Colonic mucosa (tissue), 4 donors: ENCODE measurements at regions of chr7 and their contacts with region 1.

Region 1: DNA sequence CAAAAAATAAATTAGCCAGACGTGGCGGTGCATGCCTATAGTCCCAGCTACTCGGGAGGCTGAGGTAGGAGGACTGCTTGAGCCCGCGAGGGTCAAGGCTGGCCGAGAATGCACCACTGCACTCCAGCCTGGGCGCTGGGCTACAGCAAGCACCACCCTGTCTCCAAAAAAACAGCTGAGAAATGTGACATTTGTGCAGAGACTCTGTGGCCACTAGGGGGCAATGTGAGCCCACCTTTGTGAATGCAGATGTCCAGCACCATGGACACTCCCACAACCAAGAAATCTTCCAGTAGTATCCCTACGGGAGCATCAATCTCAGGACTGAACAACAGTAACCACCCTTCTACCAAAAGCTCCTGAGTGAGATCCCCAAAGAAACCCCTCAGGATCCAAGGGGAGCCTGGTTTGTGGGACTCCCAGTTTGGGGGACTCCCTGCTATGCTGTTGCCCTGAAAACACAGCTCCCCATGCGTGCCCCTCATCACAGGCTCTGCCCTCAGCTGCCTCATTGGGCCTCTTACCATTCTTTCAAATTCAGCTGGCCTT is 6.2 kb upstream of the AHCYL2 start:
- DNase-seq: peak; percentile 90
- H3K4me3 ChIP-seq: no peak overlapping the region
- H3K27ac ChIP-seq: no peak overlapping the region
- H3K4me1 ChIP-seq: no peaks in the 10 kb centered on the region
- H3K27me3 ChIP-seq: no peaks in the 10 kb centered on the region
- CTCF ChIP-seq: peak; percentile 86

Region 2: DNA sequence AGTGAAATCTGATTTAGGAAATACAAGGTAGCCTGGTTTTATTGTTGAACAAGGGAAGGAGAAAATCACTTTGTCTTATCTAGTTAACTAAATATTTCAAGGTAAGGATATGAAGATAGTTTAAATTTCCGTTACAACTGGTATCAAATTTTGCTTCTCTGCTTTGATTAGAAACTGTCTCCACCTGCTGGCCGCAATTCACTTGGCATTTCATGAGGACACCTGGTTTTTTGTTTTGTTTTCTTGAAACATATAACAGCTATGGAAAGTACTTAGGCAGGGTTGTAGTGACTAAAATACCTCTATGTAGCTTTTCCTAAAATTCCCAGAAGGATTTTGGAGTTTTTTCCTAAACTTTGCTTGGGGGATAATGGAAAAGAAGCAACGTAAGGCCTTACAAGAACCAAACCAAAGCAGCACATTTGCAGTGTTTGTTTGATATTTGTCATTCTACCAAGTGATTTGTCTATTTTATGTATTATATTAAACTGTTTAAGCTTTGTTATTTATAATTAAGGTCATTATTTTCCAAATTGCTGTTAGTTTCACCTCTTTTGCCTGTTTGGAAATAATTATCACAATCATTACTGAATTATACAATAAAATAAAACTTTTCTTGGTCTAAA is 79.8 kb after region 1 on chr7:
- intact Hi-C with region 1: loop called (anchors 2 kb)
- DNase-seq: peak; percentile 47
- H3K4me3 ChIP-seq: no peak overlapping the region
- H3K27ac ChIP-seq: no peak overlapping the region
- H3K4me1 ChIP-seq: no peaks in the 10 kb centered on the region
- H3K27me3 ChIP-seq: no peaks in the 10 kb centered on the region
- CTCF ChIP-seq: peak; percentile 54

Region 3: GRCh38 chr7:129332284-129333035 is 113.9 kb after region 1 on chr7:
- intact Hi-C with region 1: no loop called
- DNase-seq: no peak
- H3K4me3 ChIP-seq: no peak overlapping the region
- H3K27ac ChIP-seq: no peak overlapping the region
- H3K4me1 ChIP-seq: no peaks in the 10 kb centered on the region
- H3K27me3 ChIP-seq: no peaks in the 10 kb centered on the region
- CTCF ChIP-seq: no peak

Region 4: GRCh38 chr7:129471402-129471827 is 252.8 kb after region 1 on chr7:
- intact Hi-C with region 1: loop called (anchors 5 kb)
- DNase-seq: no peak
- H3K4me3 ChIP-seq: no peak overlapping the region
- H3K27ac ChIP-seq: no peak overlapping the region
- H3K4me1 ChIP-seq: no peaks in the 10 kb centered on the region
- H3K27me3 ChIP-seq: no peaks in the 10 kb centered on the region
- CTCF ChIP-seq: no peak

Region 5: GRCh38 chr7:129635300-129636029 is 416.9 kb after region 1 on chr7:
- intact Hi-C with region 1: loop called (anchors 10 kb)
- DNase-seq: peak; percentile 70
- H3K4me3 ChIP-seq: no peak overlapping the region
- H3K27ac ChIP-seq: no peak overlapping the region
- H3K4me1 ChIP-seq: no peaks in the 10 kb centered on the region
- H3K27me3 ChIP-seq: no peaks in the 10 kb centered on the region
- CTCF ChIP-seq: peak; percentile 69